Prostate gland (tissue), 2 donors: ENCODE measurements at regions of chr12 and their contacts with region 1.

Region 1: DNA sequence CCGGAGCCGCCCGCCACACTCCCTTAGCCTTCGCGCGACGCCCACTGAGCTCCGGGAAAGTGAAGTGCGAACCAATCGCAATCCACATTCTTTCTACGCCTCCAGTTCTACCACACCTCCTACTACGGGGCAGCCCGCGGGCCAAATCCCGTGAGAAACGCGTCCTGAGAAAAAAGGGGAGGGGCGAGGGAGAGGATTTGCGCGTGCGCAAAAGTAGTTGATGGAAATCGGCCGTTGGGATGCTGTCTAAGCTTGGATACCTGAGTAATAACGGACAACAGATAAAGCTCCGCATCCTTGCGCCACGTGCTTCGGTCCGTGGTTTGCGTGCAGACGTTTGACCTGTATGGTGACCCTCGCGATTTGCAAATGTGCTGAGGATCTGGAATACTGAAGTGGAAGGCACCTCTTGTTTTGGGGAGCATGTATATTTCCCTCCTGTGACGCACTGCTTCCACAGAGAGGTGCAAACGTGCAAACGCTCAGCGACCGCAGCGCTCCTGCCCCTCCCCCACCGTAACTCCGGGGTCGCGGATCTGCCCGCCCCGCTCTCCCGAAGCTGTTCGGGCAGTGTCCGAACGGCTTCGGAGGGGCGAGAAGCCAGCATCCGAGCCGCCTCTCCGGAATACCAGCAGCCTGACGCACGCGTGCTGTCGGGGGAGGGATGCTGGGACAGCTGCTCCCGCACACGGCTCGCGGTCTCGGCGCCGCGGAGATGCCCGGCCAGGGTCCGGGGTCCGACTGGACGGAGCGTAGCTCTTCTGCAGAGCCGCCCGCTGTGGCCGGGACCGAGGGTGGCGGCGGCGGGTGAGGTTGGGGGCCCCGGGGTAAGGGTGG is at the starts of genes FAM216A and GPN3:
- DNase-seq: peak; percentile 98
- H3K4me3 ChIP-seq: peak within 1 kb of the TSS; percentile 51 to 70
- H3K27ac ChIP-seq: peak within 1 kb of the TSS; percentile 80 to 92
- H3K4me1 ChIP-seq: no peaks in the 10 kb centered on the region
- H3K27me3 ChIP-seq: no peaks in the 10 kb centered on the region
- CTCF ChIP-seq: peak in 2 of 4 experiments; percentile 18 to 21
- POLR2A ChIP-seq: peak; percentile 86
- total RNA-seq, gene FAM216A: 3.6 to 11.5 TPM
- total RNA-seq, gene GPN3: 28.4 to 40.2 TPM

Region 2: GRCh38 chr12:110501752-110502738 is 33.6 kb after region 1 on chr12 and contains the starts of genes RAD9B and VPS29:
- intact Hi-C with region 1: loop called (anchors 5 kb)
- DNase-seq: peak; percentile 97
- H3K4me3 ChIP-seq: peak within 1 kb of the TSS; percentile 70 to 93
- H3K27ac ChIP-seq: peak within 1 kb of the TSS; percentile 84 to 92
- H3K4me1 ChIP-seq: no peaks in the 10 kb centered on the region
- H3K27me3 ChIP-seq: no peaks in the 10 kb centered on the region
- CTCF ChIP-seq: peak in 2 of 4 experiments; percentile 11 to 21
- POLR2A ChIP-seq: peak; percentile 92
- total RNA-seq, gene RAD9B: 0.41 to 5.1 TPM
- total RNA-seq, gene VPS29: 60.5 to 89.8 TPM

Region 3: GRCh38 chr12:110677206-110677911 is 208.9 kb after region 1 on chr12:
- intact Hi-C with region 1: no loop called
- DNase-seq: no peak
- H3K4me3 ChIP-seq: no peak overlapping the region
- H3K27ac ChIP-seq: no peak overlapping the region
- H3K4me1 ChIP-seq: no peaks in the 10 kb centered on the region
- H3K27me3 ChIP-seq: no peaks in the 10 kb centered on the region
- CTCF ChIP-seq: no peak
- POLR2A ChIP-seq: no peak

Region 4: GRCh38 chr12:110698171-110698902 is 229.9 kb after region 1 on chr12:
- intact Hi-C with region 1: loop called (anchors 10 kb)
- DNase-seq: peak; percentile 46
- H3K4me3 ChIP-seq: no peak overlapping the region
- H3K27ac ChIP-seq: no peak overlapping the region
- H3K4me1 ChIP-seq: no peaks in the 10 kb centered on the region
- H3K27me3 ChIP-seq: no peaks in the 10 kb centered on the region
- CTCF ChIP-seq: peak; percentile 27 to 75 (median 48)
- POLR2A ChIP-seq: no peak